ENCODE measurements at regions of chr12 and their contacts with region 1.

Region 1: DNA sequence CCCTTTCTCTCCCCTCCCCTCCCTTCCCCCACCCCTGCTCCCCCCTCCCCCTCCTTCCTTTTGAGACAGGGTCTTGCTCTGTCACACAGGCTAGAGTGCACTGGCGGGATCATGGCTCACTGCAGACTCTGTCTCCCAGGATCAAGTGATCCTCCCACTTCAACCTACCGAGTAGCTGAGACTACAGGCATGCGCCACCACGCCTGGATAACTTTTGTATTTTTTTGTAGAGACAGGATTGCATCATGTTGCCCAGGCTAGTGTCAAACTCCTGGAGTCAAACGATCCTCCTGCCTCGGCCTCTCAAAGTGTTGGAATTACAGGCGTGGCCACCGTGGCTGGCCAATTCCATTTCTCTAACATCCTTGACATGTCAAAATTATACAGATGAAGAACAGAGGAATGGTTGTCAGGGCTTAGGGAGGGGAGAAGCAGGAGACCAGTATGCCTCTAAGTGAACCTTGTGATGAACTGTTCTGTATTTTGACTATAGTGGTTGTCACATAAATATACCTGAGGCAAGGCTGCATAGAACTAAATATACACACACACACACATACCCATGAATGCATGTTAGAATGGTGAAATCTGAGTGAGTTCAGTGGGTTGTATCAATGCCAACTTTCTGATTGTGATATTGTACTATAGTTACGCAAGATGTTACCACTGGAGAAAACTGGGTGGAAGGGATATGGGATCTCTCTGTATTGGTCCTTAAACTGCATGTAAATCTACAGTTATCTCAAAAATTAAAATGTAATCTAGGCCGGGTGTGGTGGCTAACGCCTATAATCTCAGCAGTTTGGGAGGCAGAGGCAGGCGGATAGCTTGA is 3.6 kb upstream of the CFAP73 start:
- DNase-seq: no peak
- H3K4me3 ChIP-seq: no peak overlapping the region
- H3K27ac ChIP-seq: no peak overlapping the region
- H3K4me1 ChIP-seq: no peaks in the 10 kb centered on the region
- H3K27me3 ChIP-seq: peaks cover 5 to 11% of the 10 kb centered on the region in 2 experiments
- CTCF ChIP-seq: no peak
- POLR2A ChIP-seq: no peak

Region 2: GRCh38 chr12:112591488-112591887 is 554.4 kb before region 1 on chr12:
- CTCF ChIA-PET with region 1: no interaction called
- POLR2A ChIA-PET with region 1: interaction called, 13 read pairs
- dilution Hi-C with region 1: no loop called
- intact Hi-C with region 1: no loop called
- DNase-seq: no peak
- H3K4me3 ChIP-seq: no peak overlapping the region
- H3K27ac ChIP-seq: no peak overlapping the region
- H3K4me1 ChIP-seq: no peaks in the 10 kb centered on the region
- H3K27me3 ChIP-seq: no peaks in the 10 kb centered on the region
- CTCF ChIP-seq: no peak
- POLR2A ChIP-seq: no peak

Region 3: DNA sequence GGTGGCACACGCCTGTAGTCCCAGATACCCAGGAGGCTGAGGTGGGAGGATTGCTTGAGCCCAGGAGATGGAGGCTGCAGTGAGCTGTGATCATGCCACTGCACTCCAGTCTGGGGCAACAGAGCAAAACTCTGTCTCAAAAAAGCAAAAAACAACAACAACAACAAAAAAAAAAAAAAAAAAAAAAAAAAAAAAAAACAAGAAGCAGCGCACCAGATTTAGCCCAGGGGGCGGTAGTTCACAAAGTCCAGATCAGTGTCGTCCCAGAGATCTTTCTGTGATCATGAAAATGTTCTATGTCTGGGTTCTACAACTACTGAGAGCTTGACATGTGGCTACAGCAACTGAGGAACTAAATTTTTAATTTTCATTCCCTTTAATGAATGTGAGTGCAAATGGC is 140.2 kb before region 1 on chr12:
- CTCF ChIA-PET with region 1: no interaction called
- POLR2A ChIA-PET with region 1: no interaction called
- dilution Hi-C with region 1: no loop called
- intact Hi-C with region 1: no loop called
- DNase-seq: no peak
- H3K4me3 ChIP-seq: no peak overlapping the region
- H3K27ac ChIP-seq: no peak overlapping the region
- H3K4me1 ChIP-seq: peaks cover 20% of the 10 kb centered on the region
- H3K27me3 ChIP-seq: no peaks in the 10 kb centered on the region
- CTCF ChIP-seq: peak; percentile 19 to 30
- POLR2A ChIP-seq: no peak

Region 4: DNA sequence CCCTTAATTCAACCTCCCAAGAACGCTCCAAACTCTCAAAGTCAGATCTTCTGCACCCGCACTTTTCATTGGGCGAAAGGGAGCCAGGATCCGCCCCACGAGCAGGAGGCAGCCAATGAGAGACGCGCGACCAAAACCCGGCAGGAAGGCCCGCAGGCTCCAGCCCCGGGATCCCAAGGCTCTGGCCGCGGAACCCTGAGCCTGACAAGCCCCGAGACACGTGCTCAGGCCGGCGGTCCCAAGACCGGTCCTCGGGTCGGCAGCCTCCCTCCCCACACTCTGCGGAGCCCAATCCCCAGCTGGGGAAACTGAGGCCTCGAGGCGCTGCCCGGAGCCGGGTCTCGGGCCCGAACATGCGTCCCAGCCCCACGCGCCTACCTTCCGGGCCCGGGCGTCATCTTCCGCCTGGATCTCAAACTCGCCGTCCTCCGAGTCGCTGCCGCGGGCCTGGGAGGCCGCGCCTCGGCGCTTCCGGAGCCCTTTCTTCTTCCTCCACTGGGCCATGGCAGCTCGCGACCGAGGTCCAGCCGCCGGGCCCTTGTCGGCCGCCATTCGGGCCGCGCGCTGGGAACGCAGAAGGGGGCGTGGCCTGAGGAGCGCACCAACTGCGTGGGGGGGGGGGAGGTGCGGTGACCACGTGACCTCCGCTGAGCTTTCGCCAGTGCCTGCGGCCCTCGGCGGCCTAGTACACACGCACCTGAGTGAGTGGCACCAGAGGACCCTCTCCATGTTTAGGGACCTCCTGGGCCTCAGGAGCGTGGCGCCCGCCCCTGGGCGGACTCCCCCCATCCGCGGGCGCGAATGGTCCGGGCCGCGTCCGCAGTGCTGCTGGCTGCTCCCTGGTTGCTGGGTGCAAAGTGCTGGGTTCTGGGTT is 39.2 kb after region 1 on chr12 and contains the starts of genes DDX54 and RITA1:
- CTCF ChIA-PET with region 1: no interaction called
- POLR2A ChIA-PET with region 1: no interaction called
- dilution Hi-C with region 1: no loop called
- intact Hi-C with region 1: no loop called
- DNase-seq: peak; percentile 93
- H3K4me3 ChIP-seq: peak within 1 kb of the TSS; percentile 45 to 79 (median 76)
- H3K27ac ChIP-seq: peak within 1 kb of the TSS; percentile 67
- H3K4me1 ChIP-seq: peaks cover 12% of the 10 kb centered on the region
- H3K27me3 ChIP-seq: no peaks in the 10 kb centered on the region
- CTCF ChIP-seq: no peak
- POLR2A ChIP-seq: peak; percentile 91
- total RNA-seq, gene DDX54: 76.4 and 90.0 TPM in 2 replicates
- total RNA-seq, gene RITA1: 20.4 and 20.7 TPM in 2 replicates

Region 5: DNA sequence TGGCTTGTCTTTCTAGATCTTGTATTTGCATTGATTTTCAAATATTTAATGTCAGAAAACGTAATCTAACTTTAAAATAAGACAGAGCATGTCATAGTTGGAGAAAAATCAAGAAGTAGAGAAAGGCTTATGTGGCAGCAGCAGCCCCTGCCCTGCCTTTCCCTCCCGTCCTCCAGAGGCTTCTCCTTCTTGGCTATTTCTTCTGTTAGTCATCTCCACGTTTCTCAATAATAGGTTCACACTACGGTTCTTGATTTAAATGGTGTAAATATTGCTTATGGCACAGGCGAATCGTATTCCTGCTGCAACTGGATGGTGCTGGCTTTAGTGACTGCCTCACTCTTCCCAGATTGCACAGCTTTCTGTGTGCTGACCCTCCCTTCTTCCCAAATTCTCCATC is 146.2 kb after region 1 on chr12:
- CTCF ChIA-PET with region 1: no interaction called
- POLR2A ChIA-PET with region 1: no interaction called
- dilution Hi-C with region 1: no loop called
- intact Hi-C with region 1: no loop called
- DNase-seq: no peak
- H3K4me3 ChIP-seq: no peak overlapping the region
- H3K27ac ChIP-seq: no peak overlapping the region
- H3K4me1 ChIP-seq: no peaks in the 10 kb centered on the region
- H3K27me3 ChIP-seq: no peaks in the 10 kb centered on the region
- CTCF ChIP-seq: no peak
- POLR2A ChIP-seq: no peak